Common myeloid progenitor, CD34-positive (primary cell): ENCODE measurements at regions of chrX and their contacts with region 1.

Region 1: GRCh38 chrX:153927922-153928760 is 2.1 kb upstream of the ARHGAP4 start:
- DNase-seq: peak; percentile 96 to 99 (median 98)
- H3K4me3 ChIP-seq: peak overlapping the region; percentile 67 to 84 (median 72)
- H3K27ac ChIP-seq: peak overlapping the region; percentile 86 to 93
- H3K4me1 ChIP-seq: peaks cover 5 to 64% (median 51%) of the 10 kb centered on the region in 4 experiments
- H3K27me3 ChIP-seq: peaks cover 0 to 12% (median 0%) of the 10 kb centered on the region in 5 experiments

Region 2: GRCh38 chrX:153906126-153906917 is 21.8 kb before region 1 on chrX:
- CTCF ChIA-PET with region 1: interaction called, 19 read pairs
- POLR2A ChIA-PET with region 1: no interaction called
- DNase-seq: no peak
- H3K4me3 ChIP-seq: no peak overlapping the region
- H3K27ac ChIP-seq: no peak overlapping the region
- H3K4me1 ChIP-seq: peaks cover 0 to 39% (median 37%) of the 10 kb centered on the region in 4 experiments
- H3K27me3 ChIP-seq: peaks cover 0 to 15% (median 0%) of the 10 kb centered on the region in 5 experiments

Region 3: DNA sequence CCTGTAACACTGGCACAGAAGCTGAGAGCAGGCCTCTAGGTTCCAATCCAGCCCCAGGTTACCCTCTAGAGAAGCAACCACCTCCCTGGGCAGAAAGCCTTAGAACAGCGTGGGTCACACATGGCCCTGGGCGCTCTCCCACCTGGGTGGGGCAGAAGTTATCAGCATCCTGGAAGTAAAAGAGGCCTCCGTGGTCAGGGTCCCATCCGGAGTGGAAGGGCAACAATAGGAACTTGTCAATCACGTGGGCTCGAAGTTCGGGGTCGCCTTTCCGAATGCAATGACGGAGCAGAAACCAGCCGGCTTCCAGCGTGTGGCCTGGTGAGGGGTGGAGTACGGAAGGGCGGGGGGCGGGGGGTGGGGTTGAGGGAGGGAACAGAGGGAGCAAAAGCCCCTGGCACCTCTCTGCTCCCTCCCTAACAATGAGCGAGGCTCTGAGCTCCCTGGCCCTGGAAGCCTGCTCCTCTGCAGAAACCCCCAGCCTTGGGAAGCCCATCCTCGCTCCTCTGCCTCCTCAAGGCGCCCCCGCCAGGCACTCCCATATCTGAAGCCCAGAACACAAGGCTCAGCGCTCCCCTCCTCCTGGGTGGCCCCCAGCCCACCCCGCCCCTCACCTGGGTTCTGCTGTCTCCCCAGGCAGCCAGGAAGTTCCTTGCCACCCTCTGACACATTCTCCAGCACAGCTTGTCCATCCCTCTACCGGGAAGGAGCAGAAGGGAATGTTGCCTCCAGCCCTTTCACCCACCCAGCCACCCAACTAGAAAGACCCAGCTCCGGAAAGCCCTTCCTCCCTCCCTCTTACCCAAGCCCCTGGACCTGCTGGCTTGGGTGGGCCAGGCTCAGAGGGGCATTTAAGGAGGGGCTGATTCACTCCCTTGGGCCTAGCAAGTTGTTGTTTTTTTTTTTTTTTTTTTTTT is 13.5 kb after region 1 on chrX:
- CTCF ChIA-PET with region 1: interaction called, 482 read pairs
- POLR2A ChIA-PET with region 1: interaction called, 20 read pairs
- DNase-seq: peak in 2 of 3 donors; percentile 70 to 75
- H3K4me3 ChIP-seq: peak overlapping the region in 5 of 7 experiments; percentile 19 to 63 (median 40)
- H3K27ac ChIP-seq: peak overlapping the region; percentile 25 to 49
- H3K4me1 ChIP-seq: peaks cover 0 to 50% (median 38%) of the 10 kb centered on the region in 4 experiments
- H3K27me3 ChIP-seq: peaks cover 0 to 27% (median 0%) of the 10 kb centered on the region in 5 experiments

Region 4: GRCh38 chrX:153947009-153947769 is 19.0 kb after region 1 on chrX:
- CTCF ChIA-PET with region 1: interaction called, 482 read pairs
- POLR2A ChIA-PET with region 1: interaction called, 20 read pairs
- DNase-seq: peak; percentile 78 to 92 (median 87)
- H3K4me3 ChIP-seq: no peak overlapping the region
- H3K27ac ChIP-seq: no peak overlapping the region
- H3K4me1 ChIP-seq: peaks cover 0 to 61% (median 59%) of the 10 kb centered on the region in 4 experiments
- H3K27me3 ChIP-seq: peaks cover 0 to 14% (median 0%) of the 10 kb centered on the region in 5 experiments

Region 5: GRCh38 chrX:153971450-153972367 is 43.6 kb after region 1 on chrX and contains the start of gene HCFC1:
- CTCF ChIA-PET with region 1: interaction called, 17 read pairs
- POLR2A ChIA-PET with region 1: interaction called, 11 read pairs
- DNase-seq: peak; percentile 89 to 96 (median 95)
- H3K4me3 ChIP-seq: peak within 1 kb of the TSS; percentile 80 to 97 (median 93)
- H3K27ac ChIP-seq: peak within 1 kb of the TSS; percentile 98 to 99
- H3K4me1 ChIP-seq: peaks cover 13 to 53% (median 51%) of the 10 kb centered on the region in 4 experiments
- H3K27me3 ChIP-seq: peaks cover 0 to 22% (median 0%) of the 10 kb centered on the region in 5 experiments